GM12878 (cell line): ENCODE measurements at regions of chr11 and their contacts with region 1.

Region 1: GRCh38 chr11:70630816-70631623 is 232.7 kb downstream of the CTTN start:
- DNase-seq: no peak
- ATAC-seq: no peak
- H3K4me3 ChIP-seq: no peak overlapping the region
- H3K27ac ChIP-seq: no peak overlapping the region
- H3K4me1 ChIP-seq: no peaks in the 10 kb centered on the region
- H3K27me3 ChIP-seq: no peaks in the 10 kb centered on the region
- CTCF ChIP-seq: no peak
- EP300 ChIP-seq: no peak
- POLR2A ChIP-seq: no peak
- RAD21 ChIP-seq: no peak

Region 2: GRCh38 chr11:70680781-70681281 is 49.8 kb after region 1 on chr11:
- CTCF ChIA-PET with region 1: no interaction called
- POLR2A ChIA-PET with region 1: no interaction called
- RAD21 ChIA-PET with region 1: no interaction called
- SMC1A ChIA-PET with region 1: no interaction called
- in situ Hi-C with region 1: loop called (anchors 5 kb)
- intact Hi-C with region 1: no loop called
- DNase-seq: no peak
- ATAC-seq: no peak
- H3K4me3 ChIP-seq: no peak overlapping the region
- H3K27ac ChIP-seq: no peak overlapping the region
- H3K4me1 ChIP-seq: no peaks in the 10 kb centered on the region
- H3K27me3 ChIP-seq: no peaks in the 10 kb centered on the region; a peak in 3 of 4 replicates
- CTCF ChIP-seq: no peak
- EP300 ChIP-seq: no peak
- POLR2A ChIP-seq: no peak
- RAD21 ChIP-seq: no peak